Activated CD8-positive, alpha-beta T cell treated with anti-CD3 and anti-CD28 coated beads, Interleukin-2, amount 10 ng/mL, durations not matched to agents 7 days and 5 days (primary cell): ENCODE measurements at regions of chr14 and their contacts with region 1.

Region 1: DNA sequence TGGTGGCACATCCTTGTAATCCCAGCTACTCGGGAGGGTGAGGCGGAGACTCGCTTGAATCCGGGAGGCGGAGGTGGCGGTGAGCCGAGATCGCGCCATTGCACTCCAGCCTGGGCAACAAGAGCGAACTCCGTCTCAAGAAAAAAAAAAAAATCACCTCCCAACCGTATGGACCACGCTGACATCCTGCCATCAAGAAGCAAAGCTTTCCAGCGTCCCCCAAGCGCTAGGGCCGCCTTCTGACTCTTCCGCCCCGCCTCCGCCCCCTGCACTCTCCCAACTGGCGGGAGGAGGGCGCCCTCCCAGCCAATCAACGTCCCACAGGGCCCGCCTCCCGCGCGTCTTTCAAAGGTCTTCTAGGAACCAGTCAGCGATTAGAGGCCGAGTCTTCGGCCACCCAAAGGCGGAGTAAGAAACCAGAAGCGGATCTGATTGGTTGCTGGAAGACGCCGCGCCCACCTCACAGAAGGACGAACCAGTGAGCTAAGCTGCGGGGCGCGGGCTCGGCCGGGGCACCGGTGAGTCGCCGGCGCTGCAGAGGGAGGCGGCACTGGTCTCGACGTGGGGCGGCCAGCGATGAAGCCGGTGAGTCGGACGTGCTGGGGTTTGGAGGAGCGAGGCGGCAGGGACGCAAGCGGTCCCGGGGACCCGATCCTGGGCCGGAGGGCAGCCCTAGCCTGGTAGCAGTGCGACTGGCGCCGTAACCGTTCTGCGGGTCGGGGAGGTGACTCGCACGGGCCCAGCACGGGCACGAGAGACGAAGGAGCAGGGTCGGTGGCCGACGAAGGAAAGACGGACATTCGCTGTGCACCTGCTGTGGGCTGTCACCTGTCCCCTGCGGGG is at the start of gene CDKN3:
- DNase-seq: peak; percentile 99
- ATAC-seq: peak; percentile 97
- H3K4me3 Mint-ChIP-seq: peak within 1 kb of the TSS; percentile 87
- H3K27ac Mint-ChIP-seq: peak within 1 kb of the TSS; percentile 87
- H3K4me1 Mint-ChIP-seq: peaks cover 34% of the 10 kb centered on the region
- H3K27me3 Mint-ChIP-seq: peaks cover under 1% of the 10 kb centered on the region
- total RNA-seq, gene CDKN3: 116 to 123 TPM

Region 2: DNA sequence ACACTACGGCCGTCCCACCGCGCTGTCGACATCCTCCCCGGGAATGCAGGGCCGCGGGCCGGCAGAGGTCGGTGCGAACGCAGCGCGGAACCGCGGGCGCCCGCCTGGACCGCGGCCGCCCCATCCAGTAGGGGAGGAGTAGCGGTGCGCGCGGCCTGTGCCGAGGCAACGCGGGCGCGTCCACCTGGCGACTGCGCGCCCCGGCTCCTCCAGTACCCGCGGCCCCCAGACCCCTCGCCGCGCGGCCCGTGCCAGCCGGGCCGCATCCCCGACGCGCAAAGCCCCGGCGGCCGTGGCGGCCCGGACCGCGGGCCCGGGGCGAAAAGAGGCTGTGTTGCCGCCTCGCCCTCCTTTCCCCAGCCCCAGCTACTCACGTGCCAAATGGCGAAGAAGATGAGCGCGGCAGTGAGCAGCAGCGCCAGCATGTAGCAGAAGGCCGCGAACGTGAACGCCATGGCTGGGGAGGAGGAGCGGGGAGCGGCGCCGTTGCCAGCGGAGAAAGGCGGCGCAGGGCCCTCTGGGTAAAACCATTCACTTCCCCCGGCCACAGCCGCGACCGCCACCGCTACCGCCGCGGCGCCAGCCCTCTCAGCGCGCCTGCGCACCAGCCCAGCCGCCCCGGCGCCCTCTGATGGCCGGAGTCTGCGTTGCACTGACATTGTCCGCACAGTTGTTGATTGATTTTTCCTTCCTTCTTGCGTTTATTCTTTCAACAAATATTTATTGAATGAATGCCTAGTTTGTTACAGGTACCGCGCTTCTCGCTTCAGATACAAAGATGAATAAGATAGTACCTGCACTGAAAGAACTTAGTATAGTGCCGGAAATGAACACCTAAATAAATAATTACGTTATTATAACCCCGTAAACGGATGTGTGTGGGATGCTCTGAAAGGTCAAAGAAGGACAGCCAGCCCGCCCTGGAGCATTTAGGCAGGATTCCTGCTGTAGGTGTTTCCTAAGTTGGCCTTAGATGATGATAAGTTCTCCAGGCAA is 44.5 kb after region 1 on chr14 and contains the start of gene CNIH1:
- CTCF ChIA-PET with region 1: interaction called, 7 read pairs
- POLR2A ChIA-PET with region 1: interaction called, 11 read pairs
- DNase-seq: peak; percentile 93
- ATAC-seq: peak; percentile 95
- H3K4me3 Mint-ChIP-seq: peak within 1 kb of the TSS; percentile 82
- H3K27ac Mint-ChIP-seq: peak within 1 kb of the TSS; percentile 88
- H3K4me1 Mint-ChIP-seq: peaks cover 40% of the 10 kb centered on the region
- H3K27me3 Mint-ChIP-seq: peaks cover 10% of the 10 kb centered on the region
- total RNA-seq, gene CNIH1: 60.5 to 65.1 TPM

Region 3: DNA sequence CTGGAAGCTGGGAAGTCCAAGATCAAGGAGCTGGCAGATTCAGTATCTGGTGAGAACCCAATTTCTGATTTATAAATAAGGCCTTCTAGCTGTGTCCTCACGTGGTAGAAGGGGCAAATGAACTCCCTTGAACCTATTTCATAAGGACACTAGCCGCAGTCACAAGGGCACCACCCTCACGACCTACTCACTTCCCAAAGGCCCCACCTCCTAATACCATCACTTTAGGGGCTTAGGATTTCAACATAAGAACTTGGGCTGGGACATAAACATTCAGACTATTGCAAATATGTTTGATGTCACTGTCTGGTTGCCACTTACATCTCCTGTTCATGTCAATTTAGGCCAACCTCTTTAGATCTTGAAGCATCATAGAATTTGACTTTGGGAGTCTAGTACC is 55.2 kb after region 1 on chr14:
- CTCF ChIA-PET with region 1: no interaction called
- POLR2A ChIA-PET with region 1: no interaction called
- DNase-seq: no peak
- ATAC-seq: no peak
- H3K4me3 Mint-ChIP-seq: no peak overlapping the region
- H3K27ac Mint-ChIP-seq: no peak overlapping the region
- H3K4me1 Mint-ChIP-seq: peaks cover 4% of the 10 kb centered on the region
- H3K27me3 Mint-ChIP-seq: peaks cover 5% of the 10 kb centered on the region

Region 4: DNA sequence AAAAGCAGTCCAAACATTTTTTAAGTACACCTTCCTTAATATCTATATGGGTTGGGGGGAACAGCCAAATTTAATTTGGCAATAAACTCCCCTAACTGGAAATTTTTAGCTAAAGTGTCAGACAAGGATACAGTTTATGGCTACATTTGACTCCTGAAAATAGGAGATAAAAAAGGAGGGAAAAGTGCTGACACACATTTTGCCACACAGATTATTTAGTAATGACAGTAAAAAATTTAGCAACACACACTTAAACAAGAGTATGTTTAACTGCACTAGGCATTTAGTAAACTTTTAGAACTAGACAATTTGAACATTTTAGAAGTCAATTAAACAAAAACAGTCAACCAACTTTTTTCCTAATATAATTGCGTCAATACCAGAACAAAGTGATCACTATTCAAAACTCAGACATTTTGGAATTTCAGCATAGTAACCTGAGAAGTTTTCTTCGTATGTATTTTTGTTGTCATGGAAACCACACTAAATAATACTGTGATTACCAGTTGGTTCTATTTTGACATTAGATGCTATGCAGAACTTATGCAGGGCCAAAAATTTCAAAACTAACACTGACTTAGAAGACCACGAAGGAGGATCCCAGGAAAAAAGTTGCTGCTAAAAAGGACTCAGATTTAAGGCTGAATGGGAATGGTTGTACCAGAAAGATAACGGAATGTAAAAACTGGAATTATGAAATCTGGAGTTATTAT is 78.6 kb after region 1 on chr14:
- CTCF ChIA-PET with region 1: no interaction called
- POLR2A ChIA-PET with region 1: no interaction called
- DNase-seq: no peak
- ATAC-seq: no peak
- H3K4me3 Mint-ChIP-seq: no peak overlapping the region
- H3K27ac Mint-ChIP-seq: no peak overlapping the region
- H3K4me1 Mint-ChIP-seq: no peaks in the 10 kb centered on the region
- H3K27me3 Mint-ChIP-seq: no peaks in the 10 kb centered on the region

Region 5: GRCh38 chr14:54509546-54510501 is 113.1 kb after region 1 on chr14 and contains the start of gene CGRRF1:
- CTCF ChIA-PET with region 1: no interaction called
- POLR2A ChIA-PET with region 1: no interaction called
- DNase-seq: peak; percentile 97
- ATAC-seq: peak; percentile 99
- H3K4me3 Mint-ChIP-seq: peak within 1 kb of the TSS; percentile 93
- H3K27ac Mint-ChIP-seq: peak within 1 kb of the TSS; percentile 87
- H3K4me1 Mint-ChIP-seq: peaks cover 34% of the 10 kb centered on the region
- H3K27me3 Mint-ChIP-seq: peaks cover 8% of the 10 kb centered on the region
- total RNA-seq, gene CGRRF1: 13.6 to 13.7 TPM